ENCODE measurements at regions of chr20 and their contacts with region 1.

Region 1: DNA sequence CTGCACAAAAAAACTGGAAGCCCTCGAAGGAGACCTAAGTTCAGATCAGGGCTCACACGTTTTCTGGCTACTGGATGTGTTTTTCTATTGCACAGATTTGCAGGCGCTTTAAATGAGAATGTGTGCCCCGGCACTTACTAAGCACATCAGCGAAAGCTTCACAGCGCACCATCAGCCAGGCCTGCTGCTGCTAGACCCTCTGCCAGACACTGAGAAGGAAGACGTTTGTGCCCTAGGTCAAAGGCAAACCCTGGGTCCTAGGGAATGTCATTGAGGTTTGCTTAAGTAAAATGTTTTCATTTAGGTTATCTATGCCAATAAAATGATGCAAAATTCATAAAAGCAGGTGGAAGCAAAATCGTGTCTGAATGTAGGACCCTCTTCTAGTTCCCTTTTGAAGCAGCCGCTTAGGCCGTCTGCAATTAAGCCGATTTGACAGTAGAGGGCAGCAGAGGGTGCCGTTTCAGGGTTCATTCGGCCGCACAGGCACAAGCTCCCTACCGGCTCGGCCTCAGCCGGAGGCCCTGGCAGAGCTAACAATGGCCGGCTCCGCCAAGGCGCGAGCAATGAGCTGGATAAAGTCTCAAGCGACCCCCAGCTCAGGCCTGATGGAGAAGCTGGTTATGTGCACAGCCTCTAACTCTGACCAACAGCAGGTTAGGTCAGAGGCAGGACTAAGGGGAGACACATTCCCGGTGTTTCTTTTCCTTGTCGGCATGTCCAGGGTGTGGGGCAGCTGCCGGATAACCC is 107.2 kb upstream of the FOXA2 start:
- DNase-seq: no peak
- H3K4me3 ChIP-seq: no peak overlapping the region
- H3K27ac ChIP-seq: no peak overlapping the region
- H3K4me1 ChIP-seq: peaks cover 4% of the 10 kb centered on the region
- H3K27me3 ChIP-seq: no peaks in the 10 kb centered on the region
- CTCF ChIP-seq: peak; percentile 87 to 91 (median 88)

Region 2: DNA sequence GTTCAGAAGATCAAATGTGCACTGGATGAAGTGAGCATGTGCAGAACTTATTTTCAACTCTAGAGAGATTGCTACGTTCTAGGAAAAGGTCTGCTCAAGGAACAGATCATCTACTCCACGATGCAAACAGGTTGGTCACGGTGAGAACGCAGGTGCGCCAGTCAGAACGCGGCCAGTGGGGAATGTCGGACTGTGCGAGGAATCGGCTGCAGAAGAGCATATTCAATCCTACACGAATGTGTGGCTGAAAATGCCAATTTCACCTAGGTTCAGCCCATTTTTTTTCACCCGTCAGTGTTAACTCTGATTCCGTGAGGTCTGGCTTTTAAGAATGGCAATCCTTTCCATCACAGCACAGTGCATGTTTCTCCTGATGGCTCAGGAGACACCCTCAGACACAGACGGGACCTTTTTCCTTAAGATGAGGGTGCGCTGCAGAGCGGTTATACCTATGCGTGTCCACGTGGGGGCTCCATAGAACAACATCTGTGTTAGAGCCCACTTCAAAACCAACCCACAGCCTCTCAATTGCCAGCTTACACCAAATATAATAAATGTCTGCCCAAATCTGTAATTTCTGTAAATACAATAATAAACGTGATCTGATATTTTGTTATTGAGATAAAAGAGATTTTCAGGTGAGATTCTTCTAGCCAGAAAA is 357.5 kb before region 1 on chr20:
- dilution Hi-C with region 1: loop called (anchors 25 kb)
- DNase-seq: no peak
- H3K4me3 ChIP-seq: no peak overlapping the region
- H3K27ac ChIP-seq: no peak overlapping the region
- H3K4me1 ChIP-seq: peaks cover 11% of the 10 kb centered on the region
- H3K27me3 ChIP-seq: peaks cover 4% of the 10 kb centered on the region
- CTCF ChIP-seq: peak; percentile 77 to 81 (median 77)

Region 3: GRCh38 chr20:22630701-22631100 is 60.8 kb before region 1 on chr20:
- dilution Hi-C with region 1: no loop called
- DNase-seq: no peak
- H3K4me3 ChIP-seq: no peak overlapping the region
- H3K27ac ChIP-seq: no peak overlapping the region
- H3K4me1 ChIP-seq: no peaks in the 10 kb centered on the region
- H3K27me3 ChIP-seq: no peaks in the 10 kb centered on the region
- CTCF ChIP-seq: no peak

Measured in keratinocyte (primary cell).